Caco-2 (cell line): ENCODE measurements at regions of chr5 and their contacts with region 1.

Region 1: GRCh38 chr5:102223542-102224477 is 72.3 kb downstream of the SLCO4C1 start:
- DNase-seq: peak in 1 of 2 experiments; percentile 67
- H3K4me3 ChIP-seq: no peak overlapping the region
- H3K4me3 Mint-ChIP-seq: no peak overlapping the region
- H3K27ac Mint-ChIP-seq: no peak overlapping the region
- H3K4me1 ChIP-seq: peaks cover 36% of the 10 kb centered on the region
- H3K4me1 Mint-ChIP-seq: peaks cover 8% of the 10 kb centered on the region
- H3K27me3 ChIP-seq: no peaks in the 10 kb centered on the region
- H3K27me3 Mint-ChIP-seq: no peaks in the 10 kb centered on the region
- CTCF ChIP-seq: peak; percentile 60 to 83

Region 2: GRCh38 chr5:101390151-101390908 is 833.5 kb before region 1 on chr5:
- CTCF ChIA-PET with region 1: no interaction called
- POLR2A ChIA-PET with region 1: no interaction called
- intact Hi-C with region 1: loop called (anchors 5 kb)
- DNase-seq: peak; percentile 39 to 69
- H3K4me3 ChIP-seq: no peak overlapping the region
- H3K4me3 Mint-ChIP-seq: no peak overlapping the region
- H3K27ac Mint-ChIP-seq: peak overlapping the region; percentile 24
- H3K4me1 ChIP-seq: no peaks in the 10 kb centered on the region
- H3K4me1 Mint-ChIP-seq: no peaks in the 10 kb centered on the region
- H3K27me3 ChIP-seq: no peaks in the 10 kb centered on the region
- H3K27me3 Mint-ChIP-seq: no peaks in the 10 kb centered on the region
- CTCF ChIP-seq: peak; percentile 49 to 75

Region 3: DNA sequence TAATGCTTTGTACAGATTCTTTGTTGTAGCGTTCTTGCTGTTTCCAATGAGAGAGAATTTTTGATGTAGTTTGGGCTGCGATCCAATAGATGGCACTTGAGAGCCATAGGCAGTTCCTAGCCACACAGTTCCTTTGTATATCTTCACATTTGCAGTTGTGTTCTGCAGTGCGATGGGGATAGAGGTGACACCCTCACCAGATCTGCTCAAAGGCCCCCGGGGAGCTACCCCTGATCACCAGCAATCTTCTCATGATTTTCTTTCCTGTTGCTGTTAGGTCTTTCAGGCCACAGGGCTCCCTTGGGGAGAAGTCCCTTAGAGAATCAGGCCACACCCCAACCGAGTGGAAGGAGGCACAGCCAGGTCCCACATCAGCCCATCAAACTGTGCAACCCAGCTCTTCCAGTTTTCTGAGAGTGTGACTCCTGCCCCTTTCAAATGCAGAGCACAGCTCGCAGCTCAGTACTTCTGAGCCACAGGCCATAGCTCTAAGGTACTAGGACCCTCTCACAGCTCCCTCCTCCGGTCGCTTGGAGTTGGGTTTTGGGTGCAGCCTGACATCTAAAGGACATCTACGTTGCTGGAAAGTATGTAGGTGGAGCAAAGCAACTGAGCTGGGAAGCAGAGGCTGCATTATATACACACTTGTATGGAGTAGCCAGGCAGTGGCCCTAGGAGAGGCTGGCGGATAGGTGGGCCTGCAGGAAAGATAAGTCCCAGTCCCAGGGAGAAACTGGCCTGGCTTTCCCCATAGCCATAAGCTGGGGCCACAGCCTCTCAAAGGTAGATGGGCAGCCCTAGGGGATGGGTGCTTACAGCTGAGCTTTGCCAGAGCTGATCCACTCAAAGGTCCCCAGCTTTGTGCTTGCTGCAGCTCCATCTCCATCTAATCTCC is 281.2 kb before region 1 on chr5:
- CTCF ChIA-PET with region 1: no interaction called
- POLR2A ChIA-PET with region 1: no interaction called
- intact Hi-C with region 1: loop called (anchors 1 kb)
- DNase-seq: peak; percentile 39 to 59
- H3K4me3 ChIP-seq: no peak overlapping the region
- H3K4me3 Mint-ChIP-seq: no peak overlapping the region
- H3K27ac Mint-ChIP-seq: no peak overlapping the region
- H3K4me1 ChIP-seq: no peaks in the 10 kb centered on the region
- H3K4me1 Mint-ChIP-seq: no peaks in the 10 kb centered on the region
- H3K27me3 ChIP-seq: no peaks in the 10 kb centered on the region; the same call in 1 of the 2 replicates
- H3K27me3 Mint-ChIP-seq: peaks cover 3% of the 10 kb centered on the region
- CTCF ChIP-seq: peak; percentile 69 to 93

Region 4: GRCh38 chr5:102090770-102091381 is 132.9 kb before region 1 on chr5:
- CTCF ChIA-PET with region 1: no interaction called
- POLR2A ChIA-PET with region 1: no interaction called
- intact Hi-C with region 1: loop called (anchors 1 kb)
- DNase-seq: peak; percentile 68 to 74
- H3K4me3 ChIP-seq: no peak overlapping the region
- H3K4me3 Mint-ChIP-seq: no peak overlapping the region
- H3K27ac Mint-ChIP-seq: no peak overlapping the region
- H3K4me1 ChIP-seq: no peaks in the 10 kb centered on the region; the same call in 1 of the 2 replicates
- H3K4me1 Mint-ChIP-seq: peaks cover 13% of the 10 kb centered on the region
- H3K27me3 ChIP-seq: no peaks in the 10 kb centered on the region
- H3K27me3 Mint-ChIP-seq: no peaks in the 10 kb centered on the region
- CTCF ChIP-seq: peak; percentile 71 to 83

Region 5: DNA sequence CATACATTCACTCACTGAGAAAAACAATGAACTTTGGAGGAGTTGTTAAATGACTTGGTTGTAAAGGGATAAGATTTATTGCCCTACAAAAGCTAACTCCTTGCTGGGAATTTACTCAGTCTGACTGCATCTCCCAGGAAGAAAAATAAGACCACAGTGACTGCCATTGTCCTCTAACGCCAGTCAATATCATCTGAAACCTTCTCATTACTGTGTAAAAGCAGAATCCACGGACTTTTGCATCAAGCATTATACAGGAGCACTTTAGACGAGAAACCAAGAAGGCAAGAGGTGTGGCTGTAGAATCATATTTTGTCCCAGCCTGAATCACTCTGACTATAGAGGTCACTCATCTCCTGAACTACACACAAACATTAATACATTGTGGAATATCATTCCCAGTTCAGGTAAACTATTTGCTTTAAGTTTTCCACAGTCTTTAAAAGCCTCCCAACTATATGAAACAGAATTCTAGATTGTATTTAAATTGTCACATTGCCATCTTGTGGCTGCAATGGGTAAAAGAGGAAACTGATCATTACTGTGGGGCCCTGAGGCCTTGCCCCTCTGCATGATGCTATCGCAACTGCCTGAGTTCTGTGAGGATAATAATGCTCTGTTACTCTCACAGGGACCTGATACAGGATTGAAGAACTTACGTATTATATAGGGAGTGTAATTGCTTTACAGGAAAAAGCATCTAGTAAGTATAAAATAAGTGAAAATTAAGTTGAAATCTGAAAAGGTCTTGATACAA is 70.6 kb before region 1 on chr5:
- CTCF ChIA-PET with region 1: no interaction called
- POLR2A ChIA-PET with region 1: no interaction called
- intact Hi-C with region 1: loop called (anchors 1 kb)
- DNase-seq: peak in 1 of 2 experiments; percentile 59
- H3K4me3 ChIP-seq: no peak overlapping the region
- H3K4me3 Mint-ChIP-seq: no peak overlapping the region
- H3K27ac Mint-ChIP-seq: peak overlapping the region; percentile 33
- H3K4me1 ChIP-seq: peaks cover 20% of the 10 kb centered on the region
- H3K4me1 Mint-ChIP-seq: peaks cover 33% of the 10 kb centered on the region
- H3K27me3 ChIP-seq: no peaks in the 10 kb centered on the region
- H3K27me3 Mint-ChIP-seq: no peaks in the 10 kb centered on the region
- CTCF ChIP-seq: peak; percentile 58 to 61